HEK293 (cell line): ENCODE measurements at regions of chr4 and their contacts with region 1.

Region 1: DNA sequence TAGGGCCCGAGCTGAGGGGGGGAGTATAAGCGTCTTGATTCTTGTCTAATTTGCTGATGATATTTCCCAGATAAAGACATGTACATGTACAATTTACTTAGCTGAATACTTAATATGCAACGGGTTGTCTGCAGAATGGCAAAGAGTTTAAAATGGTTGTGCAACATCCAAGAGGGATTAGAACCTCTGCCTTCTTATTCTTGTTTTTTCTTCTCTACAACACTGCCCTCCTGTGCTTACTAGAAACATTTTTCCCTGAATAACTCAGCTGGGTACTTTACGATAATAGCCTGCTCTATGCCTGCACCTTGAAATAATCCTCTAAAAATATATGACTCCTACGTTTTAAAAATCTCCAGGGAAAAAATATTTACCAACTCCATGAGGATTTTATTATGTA is 41.8 kb downstream of the INTS12 start:
- H3K4me3 ChIP-seq: no peak overlapping the region
- H3K27ac ChIP-seq: no peak overlapping the region
- H3K4me1 ChIP-seq: no peaks in the 10 kb centered on the region
- CTCF ChIP-seq: no peak

Region 2: GRCh38 chr4:105433421-105433820 is 233.3 kb before region 1 on chr4:
- CTCF ChIA-PET with region 1: no interaction called
- POLR2A ChIA-PET with region 1: no interaction called
- H3K4me3 ChIP-seq: no peak overlapping the region
- H3K27ac ChIP-seq: no peak overlapping the region
- H3K4me1 ChIP-seq: no peaks in the 10 kb centered on the region
- CTCF ChIP-seq: no peak

Region 3: DNA sequence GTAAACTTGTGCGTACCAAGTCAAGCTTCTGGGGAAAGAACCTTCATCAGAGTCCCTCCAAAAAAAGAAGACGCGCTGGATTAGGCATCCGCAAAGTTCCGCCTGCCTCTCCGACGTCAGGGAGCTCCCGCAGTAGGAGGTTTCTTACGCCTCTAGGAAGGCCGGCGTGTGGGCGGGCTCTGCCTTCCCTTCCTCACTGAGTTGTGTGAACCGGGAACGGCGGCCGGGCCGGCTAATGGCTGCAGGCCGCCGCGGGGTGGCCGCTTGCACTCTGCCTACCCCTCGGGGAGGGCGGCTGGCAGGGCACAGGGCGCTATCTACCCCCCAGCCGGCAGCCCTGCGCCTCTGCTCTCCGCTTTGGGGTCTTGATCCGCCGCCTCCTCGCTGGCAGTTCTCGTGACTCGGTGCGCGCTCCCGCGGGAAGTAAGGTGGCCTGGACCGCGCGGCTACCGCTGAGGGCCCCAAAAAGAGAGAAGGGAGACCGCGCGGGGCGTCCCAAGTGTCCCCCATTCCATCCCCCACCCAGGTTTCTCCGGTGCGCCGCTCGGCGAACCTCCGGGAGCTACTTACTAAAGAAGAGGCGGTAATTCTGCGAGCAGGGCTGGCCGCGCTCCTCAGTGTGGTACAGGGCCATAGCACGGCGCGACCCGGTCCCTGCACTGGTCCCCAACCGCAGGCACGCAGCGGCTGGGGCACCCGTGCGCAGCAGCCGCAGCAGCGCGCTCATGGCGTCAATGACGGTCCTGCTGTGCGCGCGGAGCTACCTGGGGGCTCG is 193.2 kb before region 1 on chr4 and contains the start of gene PPA2:
- CTCF ChIA-PET with region 1: interaction called, 13 read pairs
- POLR2A ChIA-PET with region 1: no interaction called
- H3K4me3 ChIP-seq: peak within 1 kb of the TSS; percentile 91
- H3K27ac ChIP-seq: peak within 1 kb of the TSS; percentile 79
- H3K4me1 ChIP-seq: no peaks in the 10 kb centered on the region
- CTCF ChIP-seq: peak; percentile 94; the same call in 1 of the 2 replicates

Region 4: DNA sequence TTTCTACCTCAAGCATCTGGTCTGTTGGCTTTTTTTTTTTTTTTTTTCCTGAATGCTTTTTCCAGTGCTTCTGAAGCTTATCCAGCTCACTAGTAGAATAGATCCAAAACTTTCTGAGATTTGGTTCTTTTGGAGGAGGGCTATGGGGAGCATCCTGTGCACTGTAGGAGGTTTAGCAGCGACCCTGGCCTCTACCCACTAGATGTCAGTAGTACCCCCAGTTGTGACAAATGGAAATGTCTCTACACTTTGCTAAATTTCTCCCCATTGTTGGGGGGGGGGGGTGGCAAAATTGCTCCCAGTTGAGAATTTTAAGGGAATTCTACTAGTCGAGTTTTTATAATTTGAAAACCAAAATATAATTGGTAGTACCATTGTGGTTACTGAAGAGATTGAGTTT is 169.8 kb before region 1 on chr4:
- CTCF ChIA-PET with region 1: interaction called, 11 read pairs
- POLR2A ChIA-PET with region 1: no interaction called
- H3K4me3 ChIP-seq: no peak overlapping the region
- H3K27ac ChIP-seq: no peak overlapping the region
- H3K4me1 ChIP-seq: no peaks in the 10 kb centered on the region
- CTCF ChIP-seq: no peak

Region 5: DNA sequence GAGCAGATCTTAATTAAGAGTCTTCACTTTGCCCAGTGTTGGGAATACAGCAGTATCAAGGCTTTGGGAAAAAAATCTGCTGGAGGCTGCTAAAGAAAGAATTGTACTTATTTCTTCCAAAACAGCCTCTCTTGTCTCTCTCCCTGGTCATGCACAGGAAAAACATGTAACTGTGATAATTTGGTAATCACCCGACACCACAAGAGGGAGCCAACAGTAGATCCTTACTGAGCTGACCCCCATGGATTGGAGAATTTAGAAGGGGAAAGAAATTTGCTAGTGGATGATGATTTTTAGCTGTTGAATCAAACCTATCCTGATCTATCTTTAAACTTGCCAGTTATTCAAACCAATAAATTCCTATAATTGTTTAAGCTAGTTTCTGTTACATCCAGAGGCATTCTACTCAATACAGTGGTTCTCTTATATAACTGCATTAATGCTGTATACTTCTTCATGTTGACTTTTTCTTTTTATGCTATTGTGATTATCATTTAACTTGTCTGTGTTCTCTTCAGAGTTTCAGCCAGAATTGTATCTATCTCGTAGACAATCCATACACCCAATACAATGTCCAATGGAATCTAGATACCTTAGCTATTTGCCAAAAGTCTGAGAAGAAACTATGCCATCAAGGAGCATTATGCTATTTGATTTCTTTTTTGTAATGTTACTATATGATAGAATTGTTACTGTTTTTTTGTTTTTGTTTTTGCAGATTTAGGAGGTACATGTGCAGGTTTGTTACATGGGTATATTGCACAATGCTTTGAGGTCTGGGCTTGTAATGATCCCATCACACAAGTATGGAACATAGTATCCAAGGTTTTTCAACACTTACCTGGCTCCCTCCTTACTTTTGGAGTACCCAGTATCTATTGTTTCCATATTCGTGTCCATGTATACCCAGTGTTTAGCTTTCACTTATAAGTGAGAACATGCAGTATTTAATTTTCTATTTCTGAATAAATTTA is 145.6 kb before region 1 on chr4:
- CTCF ChIA-PET with region 1: interaction called, 40 read pairs
- POLR2A ChIA-PET with region 1: no interaction called
- H3K4me3 ChIP-seq: no peak overlapping the region
- H3K27ac ChIP-seq: no peak overlapping the region
- H3K4me1 ChIP-seq: no peaks in the 10 kb centered on the region
- CTCF ChIP-seq: no peak